Activated naive CD4-positive, alpha-beta T cell treated with anti-CD3 and anti-CD28 coated beads for 36 hours (primary cell): ENCODE measurements at regions of chr2 and their contacts with region 1.

Region 1: GRCh38 chr2:134127496-134127895 is 126.4 kb upstream of the MGAT5 start:
- DNase-seq: peak; percentile 84
- H3K4me3 Mint-ChIP-seq: no peak overlapping the region
- H3K27ac Mint-ChIP-seq: no peak overlapping the region
- H3K4me1 Mint-ChIP-seq: peaks cover 61% of the 10 kb centered on the region
- H3K27me3 Mint-ChIP-seq: no peaks in the 10 kb centered on the region

Region 2: GRCh38 chr2:134198006-134198634 is 70.6 kb after region 1 on chr2:
- CTCF ChIA-PET with region 1: interaction called, 5 read pairs
- intact Hi-C with region 1: loop called (anchors 2 kb)
- DNase-seq: no peak
- H3K4me3 Mint-ChIP-seq: peak overlapping the region; percentile 15
- H3K27ac Mint-ChIP-seq: peak overlapping the region; percentile 77
- H3K4me1 Mint-ChIP-seq: peaks cover 64% of the 10 kb centered on the region
- H3K27me3 Mint-ChIP-seq: no peaks in the 10 kb centered on the region

Region 3: DNA sequence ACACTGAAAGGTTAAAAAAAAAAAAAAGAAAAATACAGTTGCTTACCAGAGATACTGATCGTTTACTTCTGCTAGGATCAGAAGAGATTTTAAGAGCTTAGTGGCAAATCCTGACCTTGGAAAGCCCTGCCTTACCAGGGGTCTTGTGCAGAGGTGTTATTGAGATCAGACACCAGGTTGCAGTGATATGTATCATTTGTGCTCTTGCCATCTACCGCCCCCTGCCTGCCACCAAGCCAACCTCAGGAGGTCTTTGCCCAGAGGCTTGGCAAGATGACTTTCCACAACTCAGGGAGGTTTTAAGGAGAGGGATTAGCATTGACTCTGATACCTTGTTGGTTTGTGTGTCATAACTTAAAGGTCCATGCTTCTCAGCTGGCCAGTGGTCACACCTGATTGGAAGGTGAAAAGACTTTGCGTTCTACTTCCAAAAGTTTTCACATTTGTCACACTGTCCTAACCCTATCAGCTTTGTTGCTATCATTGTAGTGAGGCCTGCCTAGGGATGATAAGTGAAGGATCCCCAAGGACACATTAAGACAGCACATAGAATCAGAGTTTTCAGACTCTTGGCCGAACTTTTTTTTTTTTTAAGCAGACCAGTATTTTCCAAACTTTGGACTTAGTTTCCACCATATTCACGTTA is 80.2 kb after region 1 on chr2:
- CTCF ChIA-PET with region 1: interaction called, 17 read pairs
- intact Hi-C with region 1: no loop called
- DNase-seq: peak; percentile 81
- H3K4me3 Mint-ChIP-seq: no peak overlapping the region
- H3K27ac Mint-ChIP-seq: no peak overlapping the region
- H3K4me1 Mint-ChIP-seq: peaks cover 5% of the 10 kb centered on the region
- H3K27me3 Mint-ChIP-seq: no peaks in the 10 kb centered on the region